Activated naive CD8-positive, alpha-beta T cell treated with anti-CD3 and anti-CD28 coated beads, Interleukin-2, amount 10 ng/mL, durations not matched to agents 7 days and 5 days (primary cell): ENCODE measurements at regions of chr6 and their contacts with region 1.

Region 1: DNA sequence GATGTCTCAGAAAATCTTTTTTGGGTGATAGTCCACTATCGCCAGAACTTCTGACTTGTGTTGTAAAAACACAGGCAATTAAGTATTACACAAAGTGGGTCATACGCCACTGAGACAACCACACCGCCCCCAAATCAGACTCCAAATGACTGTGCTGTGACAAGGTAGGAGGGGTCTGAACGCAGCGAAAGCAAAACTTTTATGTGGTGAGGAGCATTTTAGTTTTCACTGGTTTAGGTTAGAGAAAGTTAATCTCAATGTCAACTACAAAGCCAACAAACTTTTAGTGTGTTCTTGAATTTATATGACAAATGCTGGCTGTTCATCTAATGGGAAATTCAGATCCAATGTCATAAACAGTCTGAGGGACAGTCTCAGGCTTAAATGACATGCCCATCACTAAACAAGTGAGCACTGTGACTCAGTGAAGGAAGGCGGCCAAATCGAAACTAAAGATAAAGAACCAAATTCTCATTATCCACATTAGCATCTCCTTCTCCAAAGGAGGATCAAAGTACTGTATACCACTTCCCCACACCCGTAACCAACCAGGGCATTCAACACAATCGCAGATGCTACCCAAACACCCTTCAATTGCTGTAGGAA is 186.7 kb downstream of the GJA10 start:
- DNase-seq: peak; percentile 76
- ATAC-seq: peak; percentile 75
- H3K4me3 Mint-ChIP-seq: peak overlapping the region; percentile 94
- H3K27ac Mint-ChIP-seq: peak overlapping the region; percentile 92
- H3K4me1 Mint-ChIP-seq: peaks cover 68% of the 10 kb centered on the region
- H3K27me3 Mint-ChIP-seq: no peaks in the 10 kb centered on the region

Region 2: GRCh38 chr6:90098001-90098531 is 17.1 kb after region 1 on chr6:
- POLR2A ChIA-PET with region 1: interaction called, 13 read pairs
- DNase-seq: no peak
- ATAC-seq: peak; percentile 59
- H3K4me3 Mint-ChIP-seq: peak overlapping the region; percentile 20
- H3K27ac Mint-ChIP-seq: peak overlapping the region; percentile 75
- H3K4me1 Mint-ChIP-seq: peaks cover 71% of the 10 kb centered on the region
- H3K27me3 Mint-ChIP-seq: no peaks in the 10 kb centered on the region

Region 3: DNA sequence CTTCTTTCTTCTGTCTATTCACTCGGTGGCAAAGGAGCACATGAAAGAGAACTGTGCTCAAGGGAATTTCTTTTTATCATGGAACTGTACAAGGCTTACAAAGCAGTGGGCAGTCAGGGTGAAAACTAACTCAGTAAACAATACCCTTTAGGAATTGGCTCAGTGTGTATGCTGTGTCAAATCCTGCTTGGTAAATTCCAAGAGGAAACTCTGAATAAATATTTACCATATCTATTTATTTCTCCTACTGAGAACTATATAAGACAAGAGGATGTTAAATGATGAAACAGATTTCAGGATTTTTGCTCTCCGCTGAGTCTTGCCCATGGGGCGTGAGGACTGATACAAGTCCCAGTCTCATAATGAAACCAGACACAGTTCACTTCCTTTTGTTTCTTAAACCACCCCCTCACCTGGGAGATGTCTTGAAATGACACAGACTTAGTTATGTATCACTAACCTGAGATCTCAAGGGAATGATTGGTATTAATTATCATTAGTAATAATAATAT is 26.8 kb after region 1 on chr6:
- POLR2A ChIA-PET with region 1: interaction called, 53 read pairs
- DNase-seq: no peak
- ATAC-seq: peak; percentile 49
- H3K4me3 Mint-ChIP-seq: peak overlapping the region; percentile 60
- H3K27ac Mint-ChIP-seq: peak overlapping the region; percentile 74
- H3K4me1 Mint-ChIP-seq: peaks cover 78% of the 10 kb centered on the region
- H3K27me3 Mint-ChIP-seq: no peaks in the 10 kb centered on the region